ENCODE measurements at regions of chr6 and their contacts with region 1.

Region 1: GRCh38 chr6:109073344-109074132 is 21.1 kb downstream of the SESN1 start:
- DNase-seq: peak; percentile 76
- ATAC-seq: peak; percentile 65
- H3K4me3 ChIP-seq: no peak overlapping the region
- H3K27ac ChIP-seq: no peak overlapping the region
- H3K4me1 ChIP-seq: peaks cover 2% of the 10 kb centered on the region; the same call in 1 of the 2 replicates
- H3K27me3 ChIP-seq: no peaks in the 10 kb centered on the region
- CTCF ChIP-seq: peak; percentile 75
- POLR2A ChIP-seq: no peak
- RAD21 ChIP-seq: peak; percentile 83

Region 2: DNA sequence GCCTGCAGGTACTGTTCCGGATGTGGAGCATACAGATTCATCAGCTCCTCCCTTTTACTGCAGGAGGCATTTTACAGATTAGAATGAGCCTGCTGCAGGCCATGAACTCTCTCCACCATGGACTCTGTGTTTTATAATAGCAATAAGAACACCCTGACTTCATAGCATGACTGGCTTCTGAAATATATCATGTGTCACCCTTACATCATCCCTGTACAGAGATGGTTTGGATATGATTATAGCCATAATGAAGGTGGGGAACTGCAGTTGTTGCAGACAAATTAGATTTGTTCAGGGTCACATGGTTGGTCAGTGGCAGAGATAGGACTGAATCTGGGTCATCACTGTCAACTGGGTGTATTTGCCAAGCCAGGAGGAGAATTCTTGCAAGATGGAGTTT is 412.1 kb before region 1 on chr6:
- CTCF ChIA-PET with region 1: no interaction called
- POLR2A ChIA-PET with region 1: no interaction called
- dilution Hi-C with region 1: no loop called
- in situ Hi-C with region 1: no loop called
- intact Hi-C with region 1: loop called (anchors 10 kb)
- DNase-seq: peak; percentile 82
- ATAC-seq: peak; percentile 76
- H3K4me3 ChIP-seq: no peak overlapping the region
- H3K27ac ChIP-seq: no peak overlapping the region
- H3K4me1 ChIP-seq: peaks cover 6% of the 10 kb centered on the region; the same call in 1 of the 2 replicates
- H3K27me3 ChIP-seq: no peaks in the 10 kb centered on the region
- CTCF ChIP-seq: no peak
- POLR2A ChIP-seq: no peak
- RAD21 ChIP-seq: no peak

Region 3: DNA sequence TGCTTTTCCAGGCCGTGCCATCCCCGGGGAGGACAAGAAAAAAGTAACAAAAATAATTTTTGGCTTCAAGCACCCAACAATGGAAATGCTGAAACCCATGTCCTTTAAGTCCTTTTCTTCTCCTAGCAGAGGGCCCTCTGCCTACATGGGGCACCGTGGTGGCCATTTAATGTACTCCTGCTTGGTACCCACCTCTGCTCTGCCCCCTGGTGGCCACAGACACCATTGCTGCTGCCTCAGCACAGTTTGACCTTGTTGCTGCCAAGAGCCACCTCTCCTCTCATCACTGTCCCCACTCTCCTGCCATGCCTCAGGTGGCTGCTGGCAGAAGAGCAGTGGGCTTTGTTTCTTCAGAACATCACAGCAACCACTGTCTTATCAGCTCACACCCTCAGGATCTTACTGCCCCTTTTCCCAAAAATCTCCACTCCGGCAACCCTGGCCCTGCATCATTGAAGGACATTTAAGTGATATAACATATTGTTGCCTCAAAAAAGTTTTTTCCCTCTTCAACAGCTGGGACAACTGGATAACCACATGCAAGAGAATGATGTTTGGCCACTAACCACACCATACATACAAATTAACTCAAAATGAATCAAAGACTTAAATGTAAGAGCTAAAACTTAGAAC is 238.2 kb before region 1 on chr6:
- CTCF ChIA-PET with region 1: no interaction called
- POLR2A ChIA-PET with region 1: no interaction called
- dilution Hi-C with region 1: no loop called
- in situ Hi-C with region 1: no loop called
- intact Hi-C with region 1: loop called (anchors 5 kb)
- DNase-seq: peak; percentile 72
- ATAC-seq: peak; percentile 90
- H3K4me3 ChIP-seq: no peak overlapping the region
- H3K27ac ChIP-seq: no peak overlapping the region
- H3K4me1 ChIP-seq: peaks cover 6% of the 10 kb centered on the region; the same call in 1 of the 2 replicates
- H3K27me3 ChIP-seq: no peaks in the 10 kb centered on the region; the same call in 1 of the 2 replicates
- CTCF ChIP-seq: peak; percentile 76
- POLR2A ChIP-seq: no peak
- RAD21 ChIP-seq: peak; percentile 80

Region 4: DNA sequence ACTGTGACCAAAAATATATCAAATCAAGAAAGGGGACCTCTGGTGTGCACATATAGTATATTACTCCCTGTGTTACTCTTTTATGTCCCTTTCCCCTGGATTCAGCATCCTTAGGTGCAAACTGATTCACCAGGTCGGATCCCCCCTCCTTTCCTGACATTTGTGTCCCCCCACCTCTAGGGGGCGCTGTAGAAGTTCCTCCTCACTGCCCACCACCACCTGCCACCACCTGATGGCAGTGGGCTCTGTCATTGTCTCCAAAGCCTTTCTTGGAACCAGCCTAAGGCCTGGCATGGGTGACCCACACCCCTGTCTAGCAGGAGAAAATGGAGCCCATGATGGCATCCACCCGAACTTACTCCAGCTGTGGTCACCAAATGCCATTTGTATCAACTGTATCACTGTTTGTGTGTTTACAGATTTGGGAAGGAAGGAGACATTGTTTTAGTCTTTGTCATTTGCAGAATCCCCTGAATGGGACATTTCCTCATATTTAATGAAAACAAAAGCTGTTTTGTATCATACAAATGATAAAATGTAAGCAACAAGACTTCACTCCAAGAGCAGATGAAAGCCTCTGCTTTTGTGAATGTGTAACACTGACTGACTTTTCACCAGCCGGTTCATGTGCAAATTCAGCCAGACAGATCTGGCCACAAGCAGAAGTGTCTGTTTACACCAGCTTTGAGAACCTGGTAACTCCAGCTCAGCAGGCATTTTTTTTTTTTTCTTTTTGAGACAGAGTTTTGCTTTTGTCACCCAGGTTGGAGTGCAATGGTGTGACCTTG is 159.1 kb before region 1 on chr6:
- CTCF ChIA-PET with region 1: no interaction called
- POLR2A ChIA-PET with region 1: no interaction called
- dilution Hi-C with region 1: no loop called
- in situ Hi-C with region 1: loop called (anchors 10 kb)
- intact Hi-C with region 1: loop called (anchors 5 kb)
- DNase-seq: peak; percentile 20
- ATAC-seq: peak; percentile 48; the same call in 1 of the 2 replicates
- H3K4me3 ChIP-seq: no peak overlapping the region
- H3K27ac ChIP-seq: peak overlapping the region; percentile 9; the same call in 1 of the 2 replicates
- H3K4me1 ChIP-seq: no peaks in the 10 kb centered on the region; the same call in 1 of the 2 replicates
- H3K27me3 ChIP-seq: peaks cover 1% of the 10 kb centered on the region; the same call in 1 of the 2 replicates
- CTCF ChIP-seq: peak; percentile 41
- POLR2A ChIP-seq: no peak
- RAD21 ChIP-seq: no peak

Region 5: DNA sequence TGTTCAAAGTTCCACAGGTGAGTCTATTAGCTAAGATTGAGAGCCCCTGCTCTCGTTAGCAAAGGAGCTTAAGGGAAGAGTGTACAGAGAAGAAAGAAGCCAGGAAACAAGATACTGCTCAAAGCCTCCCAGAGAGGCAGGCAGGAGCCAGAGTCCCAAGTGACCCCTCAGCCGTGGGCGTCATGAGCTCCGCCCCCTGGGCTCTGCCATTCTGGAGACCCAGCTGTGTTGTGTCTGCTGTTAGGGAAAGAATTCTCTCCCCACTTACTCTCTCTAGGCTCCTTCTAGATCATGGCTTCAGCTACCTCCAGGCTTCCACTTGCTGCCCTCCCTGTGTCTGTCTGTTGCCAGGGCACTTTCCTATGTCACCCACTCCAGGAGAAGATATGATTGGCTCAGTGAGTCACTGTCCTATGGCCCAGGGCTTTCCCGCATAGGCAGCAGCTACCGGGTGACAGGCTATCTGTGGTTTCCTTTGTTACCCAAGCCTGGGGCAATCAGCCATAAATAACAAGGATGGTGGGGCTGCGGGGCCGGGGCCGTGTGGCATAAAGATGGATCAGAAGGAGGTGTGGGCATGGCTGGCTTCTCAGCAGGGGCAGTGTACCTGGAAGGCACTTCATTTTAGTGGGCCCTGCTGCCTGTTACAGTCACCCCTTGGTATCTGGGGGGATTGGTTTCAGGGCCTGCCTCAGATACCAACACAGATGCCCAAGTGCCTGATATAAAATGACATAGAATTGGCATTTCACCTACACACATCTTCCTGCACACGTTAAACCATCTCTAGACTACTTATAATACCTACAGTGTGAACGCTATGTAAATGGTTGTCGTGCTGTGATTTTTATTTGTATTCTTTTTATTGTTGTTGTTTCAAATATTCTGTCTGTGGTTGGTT is 106.4 kb before region 1 on chr6:
- CTCF ChIA-PET with region 1: no interaction called
- POLR2A ChIA-PET with region 1: no interaction called
- dilution Hi-C with region 1: no loop called
- in situ Hi-C with region 1: no loop called
- intact Hi-C with region 1: no loop called
- DNase-seq: peak; percentile 60
- ATAC-seq: peak; percentile 65
- H3K4me3 ChIP-seq: no peak overlapping the region
- H3K27ac ChIP-seq: no peak overlapping the region
- H3K4me1 ChIP-seq: peaks cover 3% of the 10 kb centered on the region
- H3K27me3 ChIP-seq: no peaks in the 10 kb centered on the region
- CTCF ChIP-seq: no peak
- POLR2A ChIP-seq: no peak
- RAD21 ChIP-seq: no peak